ENCODE measurements at regions of chr17 and their contacts with region 1.

Region 1: GRCh38 chr17:2157675-2158395 is 102.9 kb downstream of the HIC1 start:
- DNase-seq: no peak
- ATAC-seq: no peak
- H3K4me3 Mint-ChIP-seq: no peak overlapping the region
- H3K27ac Mint-ChIP-seq: no peak overlapping the region
- H3K4me1 Mint-ChIP-seq: peaks cover 10% of the 10 kb centered on the region
- H3K27me3 Mint-ChIP-seq: no peaks in the 10 kb centered on the region
- CTCF ChIP-seq: no peak

Region 2: GRCh38 chr17:2122641-2123302 is 35.1 kb before region 1 on chr17:
- CTCF ChIA-PET with region 1: no interaction called
- POLR2A ChIA-PET with region 1: no interaction called
- intact Hi-C with region 1: loop called (anchors 5 kb)
- DNase-seq: no peak
- ATAC-seq: peak; percentile 18
- H3K4me3 Mint-ChIP-seq: peak overlapping the region; percentile 16
- H3K27ac Mint-ChIP-seq: no peak overlapping the region
- H3K4me1 Mint-ChIP-seq: peaks cover 29% of the 10 kb centered on the region
- H3K27me3 Mint-ChIP-seq: no peaks in the 10 kb centered on the region
- CTCF ChIP-seq: no peak

Region 3: DNA sequence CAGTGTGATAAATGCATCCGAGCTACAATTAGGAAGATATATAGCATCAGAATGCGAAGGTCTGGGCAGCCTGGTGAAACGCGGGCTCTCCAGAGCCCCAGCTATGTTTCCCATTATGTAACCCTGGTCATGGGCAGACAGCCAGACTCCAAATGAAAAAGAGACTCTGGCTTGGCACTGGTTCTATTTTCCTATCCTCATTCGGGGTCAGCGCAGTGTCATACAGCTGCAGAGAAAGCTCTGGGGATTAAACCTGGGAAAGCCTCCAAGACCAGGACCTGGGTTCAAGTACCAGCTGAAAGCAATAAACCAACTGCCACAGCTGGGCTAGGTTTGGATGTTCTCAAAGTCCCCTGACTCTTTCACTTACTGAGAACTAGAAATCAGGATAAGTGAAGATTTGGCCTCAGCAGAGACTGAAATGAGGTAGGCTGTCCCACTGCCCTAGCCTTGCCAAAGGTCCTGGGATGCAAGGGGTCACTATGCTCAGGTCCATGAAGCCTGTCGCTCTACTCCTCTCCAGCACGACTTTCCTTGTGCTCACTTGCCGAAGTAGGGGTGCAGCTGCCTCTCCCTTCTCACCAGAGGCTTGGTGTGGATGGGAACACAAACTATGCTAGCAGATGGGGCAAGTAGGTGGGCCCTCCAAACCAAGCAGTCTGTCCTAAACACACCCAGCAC is 21.9 kb after region 1 on chr17:
- CTCF ChIA-PET with region 1: no interaction called
- POLR2A ChIA-PET with region 1: interaction called, 10 read pairs
- intact Hi-C with region 1: no loop called
- DNase-seq: no peak
- ATAC-seq: no peak
- H3K4me3 Mint-ChIP-seq: no peak overlapping the region
- H3K27ac Mint-ChIP-seq: no peak overlapping the region
- H3K4me1 Mint-ChIP-seq: no peaks in the 10 kb centered on the region
- H3K27me3 Mint-ChIP-seq: no peaks in the 10 kb centered on the region
- CTCF ChIP-seq: no peak